ENCODE measurements at regions of chr19 and their contacts with region 1.

Region 1: DNA sequence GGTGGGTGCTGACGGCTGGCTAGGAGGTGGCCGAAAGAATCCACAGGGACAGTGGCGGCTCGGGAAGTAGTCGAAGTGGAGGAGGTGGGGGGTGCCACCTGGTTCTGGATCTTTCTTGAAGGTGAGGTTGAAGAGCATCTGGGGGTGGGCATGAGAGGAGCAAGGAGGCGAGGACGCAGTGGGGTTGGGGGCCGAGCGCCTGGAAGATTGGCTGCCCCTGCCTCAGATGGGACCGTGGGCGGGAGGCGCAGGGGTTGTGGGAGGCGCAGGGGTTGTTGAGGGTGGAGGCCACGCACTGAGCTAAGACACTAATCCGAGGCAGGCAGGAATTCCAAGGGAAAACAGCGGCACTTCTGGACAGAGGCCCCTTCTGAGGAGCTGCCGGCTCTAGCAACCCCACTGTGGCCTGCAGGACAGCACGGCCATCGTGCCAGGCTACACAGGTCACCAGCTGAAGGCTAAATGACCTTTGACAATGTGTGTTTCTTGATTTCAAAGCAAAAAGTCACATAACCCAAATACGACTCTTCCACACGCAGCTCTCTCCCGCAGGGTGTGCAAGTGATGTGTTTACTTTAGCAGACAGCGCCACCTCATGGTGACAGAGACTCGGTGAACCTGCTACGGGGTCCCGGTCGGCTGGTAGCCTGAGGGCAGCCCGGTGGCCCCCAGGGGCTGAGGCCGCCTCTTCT is 44.1 kb upstream of the RANBP3 start:
- DNase-seq: peak; percentile 80 to 90 (median 86)
- H3K4me3 ChIP-seq: no peak overlapping the region
- H3K27ac ChIP-seq: no peak overlapping the region
- H3K4me1 ChIP-seq: peaks cover 0 to 5% (median 4%) of the 10 kb centered on the region in 4 experiments
- H3K27me3 ChIP-seq: no peaks in the 10 kb centered on the region

Region 2: GRCh38 chr19:5967994-5968430 is 54.0 kb before region 1 on chr19:
- CTCF ChIA-PET with region 1: interaction called, 13 read pairs
- POLR2A ChIA-PET with region 1: interaction called, 3 read pairs
- DNase-seq: peak; percentile 64 to 76 (median 70)
- H3K4me3 ChIP-seq: peak overlapping the region in 2 of 7 experiments; percentile 6 to 24
- H3K27ac ChIP-seq: peak overlapping the region in 1 of 2 experiments; percentile 35
- H3K4me1 ChIP-seq: peaks cover 2 to 53% (median 38%) of the 10 kb centered on the region in 4 experiments
- H3K27me3 ChIP-seq: no peaks in the 10 kb centered on the region

Region 3: DNA sequence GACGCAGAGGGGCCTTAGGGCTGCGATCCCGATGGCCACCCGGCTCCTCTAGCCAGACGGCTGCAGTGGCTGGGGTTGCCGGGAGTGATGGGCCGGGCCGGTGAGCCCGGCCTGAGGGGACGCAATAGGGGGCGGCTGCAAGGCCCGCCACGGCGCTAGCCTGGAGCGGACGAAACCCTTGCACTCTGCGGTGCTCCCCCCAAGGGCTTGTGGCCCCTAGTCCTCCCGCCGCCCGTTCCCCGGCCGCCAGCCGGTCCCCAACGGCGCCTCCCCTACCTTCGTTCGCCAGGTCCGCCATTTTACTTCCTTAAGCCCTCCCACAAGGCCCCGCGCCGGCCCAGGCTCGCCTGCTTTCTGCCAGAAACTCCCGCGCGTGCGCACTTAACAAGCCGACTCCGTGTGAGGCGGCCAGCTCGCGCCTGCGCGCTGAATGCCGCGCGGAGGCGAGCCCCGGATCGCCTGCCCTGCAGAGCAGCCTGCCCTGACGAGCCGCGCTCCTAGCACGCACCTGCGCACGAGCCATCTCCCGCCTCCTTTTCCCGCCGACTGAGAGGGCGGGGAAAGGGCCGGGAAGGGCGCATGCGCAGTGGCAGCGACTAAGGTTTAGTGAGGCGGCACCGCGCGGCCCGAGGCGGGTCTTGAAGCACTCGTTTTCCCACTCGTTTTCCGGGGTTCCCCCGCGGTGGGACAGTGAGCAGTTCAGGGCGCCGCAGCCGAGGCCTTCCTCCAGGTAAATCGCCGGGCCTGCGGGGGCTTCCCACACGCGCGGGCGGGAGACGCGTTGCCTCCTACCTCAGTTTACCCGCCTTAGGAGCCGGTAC is 44.0 kb before region 1 on chr19 and contains the start of gene RANBP3:
- CTCF ChIA-PET with region 1: interaction called, 13 read pairs
- POLR2A ChIA-PET with region 1: no interaction called
- DNase-seq: peak; percentile 99 to 100 (median 99)
- H3K4me3 ChIP-seq: peak within 1 kb of the TSS; percentile 78 to 93 (median 86)
- H3K27ac ChIP-seq: peak within 1 kb of the TSS; percentile 82 to 92
- H3K4me1 ChIP-seq: peaks cover 7 to 27% (median 24%) of the 10 kb centered on the region in 4 experiments
- H3K27me3 ChIP-seq: no peaks in the 10 kb centered on the region

Region 4: DNA sequence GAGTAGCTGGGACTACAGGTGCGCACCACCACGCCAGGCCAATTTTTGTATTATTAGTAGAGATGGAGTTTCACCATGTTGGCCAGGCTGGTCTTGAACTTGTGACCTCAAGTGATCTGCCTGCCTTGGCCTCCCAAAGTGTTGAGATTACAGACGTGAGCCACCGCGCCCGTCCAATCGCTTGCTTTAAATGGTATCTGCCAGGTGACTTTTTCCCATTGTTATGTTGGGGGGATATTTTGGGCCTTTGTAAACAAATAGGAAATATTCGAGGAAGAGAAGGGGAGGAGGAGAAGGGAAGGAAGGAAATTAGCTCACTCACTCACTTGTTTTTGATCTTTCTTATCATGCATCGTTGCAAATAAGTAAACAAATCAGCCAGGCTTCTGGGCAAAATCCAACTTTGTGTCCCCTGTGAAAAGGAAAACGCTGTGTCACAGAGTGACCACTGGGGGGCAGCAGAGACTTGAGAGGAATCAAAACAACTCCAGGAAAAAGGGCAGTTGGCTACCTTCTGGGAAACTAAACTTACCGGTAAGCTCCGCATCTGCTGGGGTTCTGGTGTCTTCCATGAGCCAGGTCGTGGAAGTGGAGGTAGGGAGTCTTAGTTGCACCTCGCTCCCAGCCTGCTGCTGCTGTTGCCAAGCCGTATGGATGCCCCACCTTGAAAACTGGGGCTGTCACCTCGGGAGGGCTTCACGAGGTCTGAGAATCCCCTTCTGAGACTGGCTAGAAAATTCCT is 34.8 kb before region 1 on chr19:
- CTCF ChIA-PET with region 1: interaction called, 17 read pairs
- POLR2A ChIA-PET with region 1: no interaction called
- DNase-seq: peak; percentile 72 to 82 (median 74)
- H3K4me3 ChIP-seq: peak overlapping the region; percentile 27 to 89 (median 60)
- H3K27ac ChIP-seq: peak overlapping the region in 1 of 2 experiments; percentile 40
- H3K4me1 ChIP-seq: peaks cover 0 to 25% (median 16%) of the 10 kb centered on the region in 4 experiments
- H3K27me3 ChIP-seq: no peaks in the 10 kb centered on the region